ENCODE measurements at regions of chr1 and their contacts with region 1.

Region 1: DNA sequence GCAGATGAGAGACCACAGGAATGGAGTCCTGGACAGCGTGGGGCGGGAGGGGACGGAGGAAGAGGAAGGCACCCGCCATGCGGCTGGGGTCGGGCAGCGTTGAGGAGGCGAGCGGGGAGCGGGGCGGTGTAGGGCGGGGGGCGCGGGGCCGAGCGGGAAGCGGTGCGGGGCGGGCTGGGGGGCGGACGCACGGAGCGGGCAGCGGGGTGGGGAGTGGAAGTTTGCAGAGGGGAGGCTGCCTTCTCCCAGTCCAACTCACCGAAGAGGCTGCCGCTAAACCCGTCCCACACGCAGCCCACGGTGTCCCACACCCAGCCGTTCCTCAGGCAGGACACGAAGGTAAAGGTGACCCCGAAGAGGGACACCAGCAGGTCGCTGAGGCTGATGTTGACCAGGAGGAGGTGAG is 543 bp downstream of the CHML start:
- DNase-seq: no peak
- ATAC-seq: peak; percentile 39
- H3K4me3 ChIP-seq: peak overlapping the region; percentile 94
- H3K27ac ChIP-seq: peak overlapping the region; percentile 75
- H3K4me1 ChIP-seq: peaks cover 10% of the 10 kb centered on the region
- H3K27me3 ChIP-seq: no peaks in the 10 kb centered on the region
- CTCF ChIP-seq: no peak
- EP300 ChIP-seq: no peak
- POLR2A ChIP-seq: no peak
- RAD21 ChIP-seq: no peak

Region 2: DNA sequence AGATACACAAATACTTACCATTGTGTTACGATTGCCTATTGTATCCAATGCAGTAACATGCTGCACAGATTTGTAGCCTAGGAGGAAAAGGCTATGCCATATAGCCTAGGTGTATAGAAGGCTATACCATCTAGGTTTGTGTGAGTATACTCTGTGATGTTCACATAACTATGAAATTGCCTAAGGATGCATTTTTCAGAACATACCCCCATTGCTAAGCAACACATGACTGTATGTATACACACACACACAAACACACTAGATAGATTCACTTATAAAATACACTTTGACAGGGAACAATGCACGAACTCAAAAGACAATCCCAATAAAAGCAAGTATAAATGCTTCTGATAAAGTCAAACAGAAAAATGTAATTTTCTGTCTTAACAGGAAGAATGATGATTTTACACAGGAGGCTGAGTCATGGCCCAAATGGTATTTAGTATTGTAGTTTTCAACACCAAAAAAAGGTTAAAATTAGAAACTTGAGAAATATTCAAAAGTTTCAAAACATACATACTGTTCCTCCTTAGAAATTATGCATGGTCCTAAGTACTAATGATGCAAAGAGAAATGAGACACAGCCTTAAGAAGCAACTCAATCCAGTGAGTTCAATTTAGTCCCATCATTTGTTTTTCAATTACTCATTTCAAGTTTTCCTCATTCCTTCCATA is 132.3 kb before region 1 on chr1:
- CTCF ChIA-PET with region 1: no interaction called
- POLR2A ChIA-PET with region 1: no interaction called
- RAD21 ChIA-PET with region 1: no interaction called
- SMC1A ChIA-PET with region 1: no interaction called
- in situ Hi-C with region 1: no loop called
- intact Hi-C with region 1: no loop called
- DNase-seq: no peak
- ATAC-seq: no peak
- H3K4me3 ChIP-seq: no peak overlapping the region
- H3K27ac ChIP-seq: no peak overlapping the region
- H3K4me1 ChIP-seq: no peaks in the 10 kb centered on the region
- H3K27me3 ChIP-seq: no peaks in the 10 kb centered on the region
- CTCF ChIP-seq: no peak
- EP300 ChIP-seq: no peak
- POLR2A ChIP-seq: no peak
- RAD21 ChIP-seq: no peak

Region 3: DNA sequence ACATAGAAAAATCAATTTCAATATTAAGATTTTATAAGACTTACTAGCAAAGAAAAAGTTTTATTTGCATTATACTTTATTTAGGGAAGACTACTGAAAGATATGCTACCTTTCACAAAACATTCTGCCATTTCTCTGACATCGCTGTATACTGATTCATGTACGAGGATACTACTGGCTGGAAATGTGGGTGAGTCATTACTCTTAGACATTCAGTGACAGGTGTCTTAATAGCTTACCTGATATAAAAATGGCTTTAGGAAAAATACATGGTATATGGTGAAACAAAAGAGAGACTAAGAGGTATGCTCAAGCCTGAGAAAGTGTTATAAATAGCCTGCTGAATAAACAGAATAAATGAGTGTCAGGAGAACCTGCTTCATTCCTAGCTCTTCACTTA is 135.4 kb after region 1 on chr1:
- CTCF ChIA-PET with region 1: no interaction called
- POLR2A ChIA-PET with region 1: no interaction called
- RAD21 ChIA-PET with region 1: no interaction called
- SMC1A ChIA-PET with region 1: no interaction called
- in situ Hi-C with region 1: no loop called
- intact Hi-C with region 1: no loop called
- DNase-seq: no peak
- ATAC-seq: no peak
- H3K4me3 ChIP-seq: no peak overlapping the region
- H3K27ac ChIP-seq: no peak overlapping the region
- H3K4me1 ChIP-seq: no peaks in the 10 kb centered on the region
- H3K27me3 ChIP-seq: no peaks in the 10 kb centered on the region
- CTCF ChIP-seq: no peak
- EP300 ChIP-seq: no peak
- POLR2A ChIP-seq: no peak
- RAD21 ChIP-seq: no peak

Region 4: GRCh38 chr1:241847796-241848685 is 208.4 kb after region 1 on chr1 and contains the start of gene EXO1:
- CTCF ChIA-PET with region 1: interaction called, 3 read pairs
- POLR2A ChIA-PET with region 1: no interaction called
- RAD21 ChIA-PET with region 1: no interaction called
- SMC1A ChIA-PET with region 1: no interaction called
- in situ Hi-C with region 1: no loop called
- intact Hi-C with region 1: loop called (anchors 5 kb)
- DNase-seq: peak; percentile 61
- ATAC-seq: peak; percentile 96
- H3K4me3 ChIP-seq: peak within 1 kb of the TSS; percentile 89
- H3K27ac ChIP-seq: peak within 1 kb of the TSS; percentile 92
- H3K4me1 ChIP-seq: no peaks in the 10 kb centered on the region; the same call in 1 of the 2 replicates
- H3K27me3 ChIP-seq: no peaks in the 10 kb centered on the region
- CTCF ChIP-seq: peak; percentile 55 to 65 (median 57)
- EP300 ChIP-seq: no peak
- POLR2A ChIP-seq: peak; percentile 88
- RAD21 ChIP-seq: peak; percentile 48
- polyA plus RNA-seq, gene EXO1: 8.7 to 17.6 TPM

Measured in GM12878 (cell line).